ENCODE measurements at regions of chr4 and their contacts with region 1.

Region 1: GRCh38 chr4:22688236-22688635 is 4.5 kb upstream of the GBA3 start:
- DNase-seq: no peak
- ATAC-seq: no peak
- H3K4me3 Mint-ChIP-seq: no peak overlapping the region
- H3K27ac Mint-ChIP-seq: no peak overlapping the region
- H3K4me1 Mint-ChIP-seq: peaks cover 9% of the 10 kb centered on the region
- H3K27me3 Mint-ChIP-seq: no peaks in the 10 kb centered on the region

Region 2: DNA sequence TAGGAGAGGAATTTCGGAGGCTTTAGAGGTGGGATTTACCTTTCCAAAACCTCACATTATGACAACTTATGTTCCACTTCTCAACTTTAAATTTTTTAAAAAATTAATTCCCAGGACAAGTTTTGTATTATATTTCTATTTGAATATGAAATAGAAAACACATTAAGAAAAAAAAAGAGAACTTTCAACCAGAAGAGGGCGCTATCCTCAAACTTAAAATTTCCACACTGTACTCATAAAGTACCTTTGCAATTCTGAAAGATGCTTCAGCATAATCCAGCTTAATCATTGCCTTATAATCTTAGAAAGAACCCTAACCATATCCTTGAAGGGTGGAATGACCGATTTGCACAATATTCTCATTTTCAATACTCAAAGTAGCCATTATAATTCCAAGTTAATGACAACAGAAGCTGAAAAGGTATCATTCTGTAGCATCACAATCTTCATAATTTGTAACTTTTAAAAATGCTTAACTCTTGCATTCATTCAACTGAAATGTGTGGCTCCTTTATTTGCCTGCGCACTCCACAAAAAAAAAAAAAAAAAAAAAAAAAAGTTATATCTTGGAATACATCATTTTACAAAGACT is 897.7 kb before region 1 on chr4:
- CTCF ChIA-PET with region 1: interaction called, 9 read pairs
- POLR2A ChIA-PET with region 1: no interaction called
- intact Hi-C with region 1: loop called (anchors 1 to 5 kb)
- DNase-seq: no peak
- ATAC-seq: no peak
- H3K4me3 Mint-ChIP-seq: no peak overlapping the region
- H3K27ac Mint-ChIP-seq: no peak overlapping the region
- H3K4me1 Mint-ChIP-seq: no peaks in the 10 kb centered on the region
- H3K27me3 Mint-ChIP-seq: no peaks in the 10 kb centered on the region

Region 3: GRCh38 chr4:22237155-22237751 is 451.0 kb before region 1 on chr4:
- CTCF ChIA-PET with region 1: no interaction called
- POLR2A ChIA-PET with region 1: no interaction called
- intact Hi-C with region 1: loop called in 1 of 2 experiments (anchors 10 kb)
- DNase-seq: peak; percentile 71
- ATAC-seq: no peak
- H3K4me3 Mint-ChIP-seq: no peak overlapping the region
- H3K27ac Mint-ChIP-seq: no peak overlapping the region
- H3K4me1 Mint-ChIP-seq: no peaks in the 10 kb centered on the region
- H3K27me3 Mint-ChIP-seq: no peaks in the 10 kb centered on the region

Region 4: DNA sequence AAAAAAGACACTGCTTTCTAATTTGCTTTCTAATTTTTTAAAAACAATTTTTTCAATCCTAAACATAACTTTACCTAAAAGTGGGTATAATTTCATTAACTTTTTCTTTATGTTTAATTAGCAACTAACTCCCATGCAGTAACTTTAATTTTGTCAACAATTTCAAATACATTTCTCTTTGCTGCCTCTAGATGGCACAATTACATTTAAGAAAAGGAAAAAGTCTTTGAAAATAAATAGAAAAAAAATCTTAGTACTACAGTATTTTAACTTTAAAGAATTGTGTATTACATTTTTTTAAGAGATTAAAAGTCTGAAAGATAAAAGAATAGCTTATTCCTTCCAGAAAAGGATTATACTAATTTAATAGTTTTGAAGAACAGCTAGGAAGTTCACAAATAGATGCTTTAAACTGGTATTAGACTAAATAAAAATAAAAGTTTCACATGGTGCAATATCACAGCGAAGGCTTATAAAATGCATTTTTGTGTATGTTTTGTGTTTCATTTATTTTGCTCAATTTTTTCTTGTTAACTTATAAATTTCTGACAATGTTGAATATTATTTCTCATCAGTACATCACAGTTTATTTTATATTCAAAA is 277.5 kb before region 1 on chr4:
- CTCF ChIA-PET with region 1: interaction called, 13 read pairs
- POLR2A ChIA-PET with region 1: no interaction called
- intact Hi-C with region 1: loop called (anchors 1 kb)
- DNase-seq: no peak
- ATAC-seq: no peak
- H3K4me3 Mint-ChIP-seq: no peak overlapping the region
- H3K27ac Mint-ChIP-seq: no peak overlapping the region
- H3K4me1 Mint-ChIP-seq: no peaks in the 10 kb centered on the region
- H3K27me3 Mint-ChIP-seq: no peaks in the 10 kb centered on the region

Region 5: GRCh38 chr4:22515145-22515887 is 172.9 kb before region 1 on chr4:
- CTCF ChIA-PET with region 1: no interaction called
- POLR2A ChIA-PET with region 1: no interaction called
- intact Hi-C with region 1: loop called in 1 of 2 experiments (anchors 5 kb)
- DNase-seq: peak; percentile 56
- ATAC-seq: peak; percentile 72
- H3K4me3 Mint-ChIP-seq: peak overlapping the region; percentile 89
- H3K27ac Mint-ChIP-seq: peak overlapping the region; percentile 88
- H3K4me1 Mint-ChIP-seq: peaks cover 13% of the 10 kb centered on the region
- H3K27me3 Mint-ChIP-seq: peaks cover 14% of the 10 kb centered on the region

Region 6: DNA sequence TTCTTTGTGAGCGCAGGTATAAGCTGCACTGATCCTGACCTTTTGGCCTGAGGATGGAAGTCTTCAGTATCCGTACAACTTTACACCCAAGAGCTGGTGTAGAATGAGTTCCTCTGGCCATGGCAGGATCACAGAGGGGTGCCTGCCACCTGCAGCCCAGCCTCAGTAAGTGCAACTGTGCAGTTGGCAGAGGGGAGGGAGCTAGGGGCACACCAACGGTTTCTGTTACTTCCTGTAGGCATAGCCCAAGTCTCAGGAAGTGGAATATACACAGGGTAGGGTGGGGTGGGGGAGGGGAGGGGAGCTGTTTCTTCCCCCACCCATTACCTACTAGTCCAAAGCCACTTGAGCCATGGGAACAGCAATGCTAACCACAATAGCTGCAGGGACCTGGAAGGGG is 80.9 kb before region 1 on chr4:
- CTCF ChIA-PET with region 1: no interaction called
- POLR2A ChIA-PET with region 1: no interaction called
- intact Hi-C with region 1: loop called in 1 of 2 experiments (anchors 1 kb)
- DNase-seq: peak; percentile 73
- ATAC-seq: peak; percentile 99
- H3K4me3 Mint-ChIP-seq: no peak overlapping the region
- H3K27ac Mint-ChIP-seq: no peak overlapping the region
- H3K4me1 Mint-ChIP-seq: peaks cover 26% of the 10 kb centered on the region
- H3K27me3 Mint-ChIP-seq: no peaks in the 10 kb centered on the region

Region 7: DNA sequence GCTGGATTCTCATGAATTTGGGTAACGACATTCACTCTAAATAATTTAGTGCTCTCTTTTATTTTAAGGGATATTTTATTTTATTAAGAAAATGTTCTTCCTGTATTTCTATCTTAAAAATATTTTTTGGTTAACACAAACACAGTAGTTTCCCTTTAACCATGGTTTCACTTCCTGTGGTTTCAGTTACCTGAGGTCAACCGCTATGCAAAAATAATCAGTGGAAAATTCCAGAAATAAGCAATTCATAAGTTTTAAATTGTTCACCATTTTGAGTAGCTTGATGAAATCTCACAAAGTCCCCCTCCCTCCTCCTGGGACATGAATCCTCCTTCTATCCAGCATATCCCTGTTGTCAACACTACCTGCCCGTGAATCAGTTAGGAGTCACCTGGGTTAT is 75.9 kb after region 1 on chr4:
- CTCF ChIA-PET with region 1: no interaction called
- POLR2A ChIA-PET with region 1: no interaction called
- intact Hi-C with region 1: no loop called
- DNase-seq: no peak
- ATAC-seq: no peak
- H3K4me3 Mint-ChIP-seq: no peak overlapping the region
- H3K27ac Mint-ChIP-seq: no peak overlapping the region
- H3K4me1 Mint-ChIP-seq: no peaks in the 10 kb centered on the region
- H3K27me3 Mint-ChIP-seq: peaks cover 5% of the 10 kb centered on the region